CD8-positive, alpha-beta memory T cell (primary cell): ENCODE measurements at regions of chr4 and their contacts with region 1.

Region 1: GRCh38 chr4:80461418-80461817 is 125.9 kb downstream of the CFAP299 start:
- DNase-seq: no peak
- H3K4me3 ChIP-seq: no peak overlapping the region
- H3K4me3 Mint-ChIP-seq: no peak overlapping the region
- H3K27ac ChIP-seq: no peak overlapping the region
- H3K27ac Mint-ChIP-seq: peak overlapping the region in 2 of 8 donors; percentile 14 to 32
- H3K4me1 ChIP-seq: peaks cover 15% of the 10 kb centered on the region
- H3K4me1 Mint-ChIP-seq: peaks cover 22 to 34% (median 25%) of the 10 kb centered on the region in 3 donors
- H3K27me3 ChIP-seq: no peaks in the 10 kb centered on the region
- H3K27me3 Mint-ChIP-seq: no peaks in the 10 kb centered on the region

Region 2: DNA sequence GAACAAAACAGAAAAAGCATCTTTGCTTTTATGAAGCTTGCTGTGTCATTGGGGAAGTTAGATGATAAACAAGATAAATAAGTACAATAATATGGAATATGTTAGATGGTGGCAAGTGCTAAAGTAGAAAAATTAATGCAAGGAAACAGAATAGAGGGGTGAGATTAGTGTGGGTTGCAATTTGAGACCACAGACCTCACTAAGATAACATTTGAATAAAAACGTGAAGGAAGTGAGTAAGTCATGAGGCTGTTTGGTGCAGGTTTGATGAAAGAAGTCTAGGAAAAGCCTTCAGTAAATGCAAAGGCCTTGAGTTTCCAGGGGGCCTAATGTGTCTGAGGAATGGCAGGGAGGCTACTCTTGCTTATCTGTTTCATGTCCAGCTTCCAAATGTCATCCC is 23.4 kb before region 1 on chr4:
- CTCF ChIA-PET with region 1: interaction called, 15 read pairs
- POLR2A ChIA-PET with region 1: no interaction called
- DNase-seq: peak in 1 of 5 donors; percentile 32
- H3K4me3 ChIP-seq: no peak overlapping the region
- H3K4me3 Mint-ChIP-seq: peak overlapping the region in 6 of 7 donors; percentile 7 to 49 (median 37)
- H3K27ac ChIP-seq: no peak overlapping the region
- H3K27ac Mint-ChIP-seq: peak overlapping the region; percentile 1 to 69 (median 40)
- H3K4me1 ChIP-seq: peaks cover 17% of the 10 kb centered on the region
- H3K4me1 Mint-ChIP-seq: peaks cover 25 to 44% (median 38%) of the 10 kb centered on the region in 3 donors
- H3K27me3 ChIP-seq: no peaks in the 10 kb centered on the region
- H3K27me3 Mint-ChIP-seq: no peaks in the 10 kb centered on the region

Region 3: GRCh38 chr4:80592950-80593349 is 131.5 kb after region 1 on chr4:
- CTCF ChIA-PET with region 1: no interaction called
- POLR2A ChIA-PET with region 1: no interaction called
- DNase-seq: no peak
- H3K4me3 ChIP-seq: no peak overlapping the region
- H3K4me3 Mint-ChIP-seq: no peak overlapping the region
- H3K27ac ChIP-seq: no peak overlapping the region
- H3K27ac Mint-ChIP-seq: no peak overlapping the region
- H3K4me1 ChIP-seq: no peaks in the 10 kb centered on the region
- H3K4me1 Mint-ChIP-seq: no peaks in the 10 kb centered on the region
- H3K27me3 ChIP-seq: no peaks in the 10 kb centered on the region
- H3K27me3 Mint-ChIP-seq: no peaks in the 10 kb centered on the region